Heart right ventricle (tissue), 16 donors: ENCODE measurements at regions of chr9 and their contacts with region 1.

Region 1: DNA sequence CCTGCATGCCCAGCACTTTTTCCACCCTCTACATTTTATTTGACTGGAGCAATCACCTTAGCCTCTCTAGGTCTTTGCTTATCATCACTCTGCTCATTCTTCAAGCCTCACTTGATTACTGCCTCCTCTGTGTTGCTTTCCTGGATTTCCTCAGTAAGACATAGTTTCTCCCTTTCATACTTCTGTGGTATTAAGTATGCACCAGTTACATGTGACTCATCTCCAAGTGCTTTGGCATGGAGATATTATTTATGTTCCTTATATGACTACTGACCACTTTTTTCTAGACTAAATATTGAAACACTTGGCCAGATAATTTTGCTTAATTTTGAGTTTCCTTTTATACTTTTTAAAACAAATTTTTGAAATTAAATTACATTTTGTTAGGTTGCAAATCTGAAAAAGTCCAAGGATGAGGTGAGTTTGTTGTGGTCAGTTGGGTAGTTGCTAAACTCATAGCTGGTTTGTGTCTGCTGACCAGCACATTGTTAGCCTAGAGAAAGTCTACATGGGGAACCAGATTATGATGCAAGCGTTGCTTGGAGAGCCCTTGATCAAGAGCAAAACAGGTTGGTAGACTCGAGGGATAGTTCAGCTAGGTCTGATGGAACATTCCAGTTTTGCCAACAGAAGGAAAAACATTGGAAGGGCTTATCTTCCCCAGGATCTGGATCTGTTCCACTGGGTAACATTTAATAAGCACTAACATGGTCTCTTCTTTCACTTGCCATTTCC is 140.2 kb downstream of the TMC1 start:
- DNase-seq: no peak
- ATAC-seq: no peak
- H3K4me3 ChIP-seq: no peak overlapping the region
- H3K27ac ChIP-seq: no peak overlapping the region
- H3K4me1 ChIP-seq: no peaks in the 10 kb centered on the region
- H3K27me3 ChIP-seq: no peaks in the 10 kb centered on the region
- CTCF ChIP-seq: no peak

Region 2: GRCh38 chr9:70852711-70853240 is 1808.8 kb before region 1 on chr9:
- intact Hi-C with region 1: no loop called
- DNase-seq: no peak
- ATAC-seq: no peak
- H3K4me3 ChIP-seq: no peak overlapping the region
- H3K27ac ChIP-seq: no peak overlapping the region
- H3K4me1 ChIP-seq: no peaks in the 10 kb centered on the region
- H3K27me3 ChIP-seq: no peaks in the 10 kb centered on the region
- CTCF ChIP-seq: no peak

Region 3: GRCh38 chr9:72599879-72600534 is 61.6 kb before region 1 on chr9:
- intact Hi-C with region 1: loop called in 1 of 10 experiments (anchors 10 kb)
- DNase-seq: no peak
- ATAC-seq: no peak
- H3K4me3 ChIP-seq: no peak overlapping the region
- H3K27ac ChIP-seq: no peak overlapping the region
- H3K4me1 ChIP-seq: peaks cover 0 to 10% (median 7%) of the 10 kb centered on the region in 9 donors
- H3K27me3 ChIP-seq: no peaks in the 10 kb centered on the region
- CTCF ChIP-seq: no peak

Region 4: DNA sequence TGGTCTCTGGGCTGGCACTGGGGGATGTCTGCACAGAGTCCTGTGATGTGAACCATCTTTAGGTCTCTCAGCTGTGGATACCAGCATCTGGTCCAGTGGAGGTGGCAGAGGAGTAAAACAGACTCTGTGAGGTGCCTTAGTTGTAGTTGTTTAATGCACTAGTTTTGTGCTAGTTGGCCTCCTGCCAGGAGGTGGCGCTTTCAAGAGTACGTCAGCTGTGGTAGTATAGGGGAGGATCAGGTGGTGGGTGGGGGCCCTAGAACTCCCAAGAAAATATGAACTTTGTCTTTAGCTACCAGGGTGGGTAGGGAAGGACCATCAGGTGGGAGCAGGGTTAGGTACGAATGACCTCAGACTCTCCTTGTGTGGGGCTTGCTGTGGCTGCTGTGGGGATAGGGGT is 56.9 kb after region 1 on chr9:
- intact Hi-C with region 1: no loop called
- DNase-seq: no peak
- ATAC-seq: no peak
- H3K4me3 ChIP-seq: no peak overlapping the region
- H3K27ac ChIP-seq: no peak overlapping the region
- H3K4me1 ChIP-seq: no peaks in the 10 kb centered on the region
- H3K27me3 ChIP-seq: no peaks in the 10 kb centered on the region
- CTCF ChIP-seq: no peak

Region 5: DNA sequence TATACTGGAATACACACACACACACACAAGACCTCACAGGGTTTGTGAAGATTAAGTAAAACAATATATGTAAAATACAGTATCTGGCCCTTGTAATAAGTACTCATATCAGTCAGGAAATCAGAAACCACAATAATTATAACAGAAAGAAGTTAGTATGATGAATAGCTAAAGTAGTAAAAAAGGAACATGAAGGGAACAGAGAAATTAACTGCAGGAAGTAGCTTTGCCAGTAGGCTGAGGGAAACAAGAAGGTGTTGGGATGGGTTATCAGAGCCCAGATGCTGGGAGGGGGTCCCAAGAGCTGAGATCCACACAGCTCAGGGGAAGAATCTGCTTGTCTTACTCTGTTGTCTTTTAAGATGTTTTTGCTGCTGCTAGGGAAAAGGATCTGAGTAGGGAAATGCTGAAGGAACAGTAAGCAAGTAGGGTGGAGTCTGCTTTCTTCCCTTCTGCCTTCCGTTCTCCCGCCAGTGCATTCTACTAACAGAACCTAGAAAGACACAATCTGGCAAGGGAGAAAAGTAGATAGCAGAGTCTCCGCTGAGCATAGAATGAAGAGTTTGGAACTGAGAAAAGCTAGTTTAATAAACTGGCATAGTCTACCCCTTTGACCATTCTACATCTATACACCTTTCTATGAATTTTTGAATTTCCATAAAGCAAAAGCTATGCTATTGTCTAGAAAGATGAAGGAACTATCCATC is 346.6 kb after region 1 on chr9:
- intact Hi-C with region 1: no loop called
- DNase-seq: no peak
- ATAC-seq: no peak
- H3K4me3 ChIP-seq: no peak overlapping the region
- H3K27ac ChIP-seq: no peak overlapping the region
- H3K4me1 ChIP-seq: peaks cover 0 to 10% (median 0%) of the 10 kb centered on the region in 9 donors
- H3K27me3 ChIP-seq: peaks cover 0 to 4% (median 0%) of the 10 kb centered on the region in 7 donors
- CTCF ChIP-seq: no peak

Region 6: DNA sequence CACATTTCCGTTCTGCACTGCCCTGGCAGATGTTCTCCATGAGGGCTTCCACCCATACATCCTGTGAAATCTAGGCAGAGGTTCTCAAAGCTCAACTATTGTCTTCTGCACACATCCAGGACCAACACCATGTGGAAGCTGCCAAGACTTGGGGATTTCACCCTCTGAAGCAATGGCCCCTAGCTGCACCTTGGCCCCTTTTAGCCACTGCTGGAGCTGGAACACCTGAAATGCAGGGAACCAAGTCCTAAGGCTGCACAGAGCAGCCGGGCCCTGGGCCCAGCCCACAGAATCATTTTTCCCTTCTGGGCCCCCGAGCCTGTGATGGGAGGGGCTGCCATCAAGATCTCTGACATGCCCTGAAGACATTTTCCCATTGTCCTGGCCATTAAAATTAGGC is 718.8 kb after region 1 on chr9:
- intact Hi-C with region 1: no loop called
- DNase-seq: no peak
- ATAC-seq: no peak
- H3K4me3 ChIP-seq: no peak overlapping the region
- H3K27ac ChIP-seq: no peak overlapping the region
- H3K4me1 ChIP-seq: no peaks in the 10 kb centered on the region
- H3K27me3 ChIP-seq: no peaks in the 10 kb centered on the region
- CTCF ChIP-seq: no peak